A549 (cell line): ENCODE measurements at regions of chr12 and their contacts with region 1.

Region 1: GRCh38 chr12:6215932-6216494 is 15.8 kb downstream of the CD9 start:
- DNase-seq: peak; percentile 96 to 98
- ATAC-seq: peak; percentile 97 to 98
- H3K4me3 ChIP-seq: no peak overlapping the region
- H3K27ac ChIP-seq: peak overlapping the region; percentile 78 to 95
- H3K4me1 ChIP-seq: peaks cover 49% of the 10 kb centered on the region
- CTCF ChIP-seq: no peak
- EP300 ChIP-seq: no peak
- POLR2A ChIP-seq: no peak
- RAD21 ChIP-seq: no peak

Region 2: DNA sequence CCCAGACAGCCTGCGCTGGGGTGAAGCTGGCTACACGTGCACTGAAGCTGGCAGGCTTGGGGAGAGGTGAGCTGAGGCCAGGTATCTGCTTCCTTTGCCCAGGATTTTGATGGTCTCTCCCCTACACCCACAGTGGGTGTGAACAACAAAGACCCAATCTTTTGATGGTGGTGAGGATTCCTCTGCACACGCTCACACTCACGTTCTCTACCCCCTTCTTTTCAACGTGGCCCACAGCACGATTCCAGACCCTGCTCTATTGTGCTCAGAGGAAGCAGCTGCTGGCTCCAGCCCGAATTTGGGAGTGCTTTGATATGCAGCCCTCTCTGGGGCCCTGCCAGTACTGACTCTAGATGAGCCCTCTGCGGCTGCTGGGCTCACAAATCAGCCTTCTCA is 10.9 kb before region 1 on chr12:
- CTCF ChIA-PET with region 1: interaction called, 31 read pairs
- POLR2A ChIA-PET with region 1: interaction called, 5 read pairs
- DNase-seq: no peak
- ATAC-seq: no peak
- H3K4me3 ChIP-seq: no peak overlapping the region
- H3K27ac ChIP-seq: peak overlapping the region in 1 of 2 experiments; percentile 16; a peak in 1 of 6 replicates
- H3K4me1 ChIP-seq: peaks cover 33% of the 10 kb centered on the region
- CTCF ChIP-seq: no peak
- EP300 ChIP-seq: no peak
- POLR2A ChIP-seq: no peak
- RAD21 ChIP-seq: no peak